PC-3 (cell line): ENCODE measurements at regions of chr17 and their contacts with region 1.

Region 1: GRCh38 chr17:73371285-73371684 is 59.5 kb upstream of the CDC42EP4 start:
- DNase-seq: peak; percentile 90
- ATAC-seq: peak; percentile 61
- H3K4me3 ChIP-seq: no peak overlapping the region
- H3K27ac ChIP-seq: peak overlapping the region; percentile 15; the same call in 1 of the 2 replicates
- H3K4me1 ChIP-seq: peaks cover 10% of the 10 kb centered on the region
- H3K27me3 ChIP-seq: no peaks in the 10 kb centered on the region
- CTCF ChIP-seq: no peak

Region 2: GRCh38 chr17:73247726-73248125 is 123.6 kb before region 1 on chr17:
- CTCF ChIA-PET with region 1: interaction called, 14 read pairs
- POLR2A ChIA-PET with region 1: no interaction called
- intact Hi-C with region 1: no loop called
- DNase-seq: no peak
- ATAC-seq: peak; percentile 31; the same call in 1 of the 2 replicates
- H3K4me3 ChIP-seq: no peak overlapping the region
- H3K27ac ChIP-seq: no peak overlapping the region
- H3K4me1 ChIP-seq: no peaks in the 10 kb centered on the region
- H3K27me3 ChIP-seq: no peaks in the 10 kb centered on the region
- CTCF ChIP-seq: peak; percentile 49; the same call in 1 of the 2 replicates

Region 3: DNA sequence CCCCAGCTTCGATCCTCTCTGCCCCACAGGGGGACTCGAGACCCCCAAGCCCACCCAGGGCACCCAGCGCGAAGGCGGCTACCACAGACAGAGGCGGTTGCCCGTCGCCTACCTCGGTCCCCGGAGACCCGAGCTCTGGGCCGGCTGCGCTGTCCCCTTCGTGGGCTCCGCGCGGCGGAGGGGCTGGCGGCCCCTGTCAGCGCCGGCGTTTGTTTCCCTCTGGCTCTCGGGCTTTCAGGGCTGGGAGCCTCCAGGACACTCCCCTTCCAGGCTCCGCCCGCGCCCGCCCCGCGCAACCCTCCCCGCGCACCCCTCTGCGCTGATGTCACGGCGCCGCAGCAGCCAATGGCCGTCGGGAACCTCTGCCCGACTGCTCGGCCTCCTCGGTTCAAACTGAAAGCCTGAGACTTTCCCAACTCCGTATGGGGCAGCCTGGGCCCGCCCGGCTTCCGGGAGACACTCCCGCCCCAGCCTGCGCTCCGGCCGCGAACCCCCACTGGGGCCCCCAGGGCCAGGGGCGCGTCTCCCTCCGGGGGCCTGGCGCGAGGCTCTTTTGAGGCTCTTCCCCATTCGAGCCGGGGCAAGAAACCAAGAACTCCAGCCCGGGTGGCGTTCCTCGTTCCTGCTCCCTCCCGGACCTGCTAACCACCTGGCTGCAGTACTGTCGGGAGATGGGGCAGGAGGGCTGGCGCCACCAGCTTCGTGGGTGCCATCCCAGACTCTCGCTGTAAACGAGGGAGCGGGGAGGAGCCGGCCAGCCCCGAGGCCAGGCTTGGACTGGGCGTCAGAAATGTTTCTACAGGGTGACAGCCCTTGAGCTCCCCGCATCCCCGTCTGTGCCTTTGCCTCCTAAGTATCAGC is 59.3 kb before region 1 on chr17 and contains the start of gene CDC42EP4:
- CTCF ChIA-PET with region 1: interaction called, 13 read pairs
- POLR2A ChIA-PET with region 1: interaction called, 4 read pairs
- intact Hi-C with region 1: loop called (anchors 1 kb)
- DNase-seq: peak; percentile 98
- ATAC-seq: peak; percentile 81
- H3K4me3 ChIP-seq: peak within 1 kb of the TSS; percentile 94
- H3K27ac ChIP-seq: peak within 1 kb of the TSS; percentile 82
- H3K4me1 ChIP-seq: peaks cover 35% of the 10 kb centered on the region
- H3K27me3 ChIP-seq: no peaks in the 10 kb centered on the region
- CTCF ChIP-seq: no peak
- total RNA-seq, gene CDC42EP4: 83.1 and 109 TPM in 2 replicates

Region 4: GRCh38 chr17:73342050-73342522 is 29.2 kb before region 1 on chr17:
- CTCF ChIA-PET with region 1: no interaction called
- POLR2A ChIA-PET with region 1: no interaction called
- intact Hi-C with region 1: no loop called
- DNase-seq: peak; percentile 48
- ATAC-seq: peak; percentile 34
- H3K4me3 ChIP-seq: no peak overlapping the region
- H3K27ac ChIP-seq: no peak overlapping the region
- H3K4me1 ChIP-seq: peaks cover 28% of the 10 kb centered on the region
- H3K27me3 ChIP-seq: no peaks in the 10 kb centered on the region
- CTCF ChIP-seq: no peak

Region 5: GRCh38 chr17:73360961-73361761 is 10.1 kb before region 1 on chr17:
- CTCF ChIA-PET with region 1: interaction called, 5 read pairs
- POLR2A ChIA-PET with region 1: interaction called, 34 read pairs
- intact Hi-C with region 1: no loop called
- DNase-seq: no peak
- ATAC-seq: no peak
- H3K4me3 ChIP-seq: no peak overlapping the region
- H3K27ac ChIP-seq: no peak overlapping the region
- H3K4me1 ChIP-seq: peaks cover 10% of the 10 kb centered on the region; the same call in 1 of the 2 replicates
- H3K27me3 ChIP-seq: no peaks in the 10 kb centered on the region
- CTCF ChIP-seq: no peak

Region 6: GRCh38 chr17:73929860-73930430 is 558.7 kb after region 1 on chr17:
- CTCF ChIA-PET with region 1: no interaction called
- POLR2A ChIA-PET with region 1: no interaction called
- intact Hi-C with region 1: no loop called
- DNase-seq: no peak
- ATAC-seq: no peak
- H3K4me3 ChIP-seq: no peak overlapping the region
- H3K27ac ChIP-seq: no peak overlapping the region
- H3K4me1 ChIP-seq: no peaks in the 10 kb centered on the region
- H3K27me3 ChIP-seq: peaks cover 46% of the 10 kb centered on the region; the same call in 1 of the 2 replicates
- CTCF ChIP-seq: no peak